PC-3 (cell line): ENCODE measurements at regions of chr11 and their contacts with region 1.

Region 1: DNA sequence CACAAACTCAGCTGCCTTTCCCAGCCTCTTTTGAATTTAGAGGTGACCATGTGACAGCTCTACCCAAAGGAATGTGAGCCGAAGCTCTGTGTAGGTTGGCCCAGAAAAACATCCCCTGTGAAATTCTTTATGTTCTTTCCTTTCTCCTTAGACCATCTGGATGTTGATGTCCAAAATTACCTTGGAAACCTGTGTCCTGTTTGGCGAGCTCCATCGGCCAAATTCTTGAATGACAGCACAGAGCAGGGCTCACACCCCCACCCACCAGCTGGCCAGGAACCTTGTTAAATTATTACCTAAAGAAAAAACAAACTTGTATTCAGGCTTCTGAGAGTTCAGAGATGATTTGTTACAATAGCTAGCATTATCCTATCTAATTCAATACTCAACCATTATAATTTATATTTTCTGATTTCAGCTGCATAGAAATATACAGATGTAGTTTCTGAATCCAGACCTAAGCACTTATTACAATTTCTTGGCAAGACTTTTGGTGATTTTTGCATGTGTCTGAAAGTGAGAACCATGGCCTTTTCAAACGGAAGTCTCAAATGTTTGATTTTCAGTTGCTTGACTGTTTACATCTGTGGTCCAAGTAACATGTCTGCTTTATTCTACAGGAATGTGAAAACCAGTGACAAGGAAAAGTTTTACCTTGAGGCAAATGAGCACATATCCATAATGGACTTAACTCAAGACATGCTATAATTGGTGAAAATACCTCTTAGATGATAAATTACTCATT is 554.2 kb downstream of the NTM start:
- DNase-seq: peak; percentile 81
- ATAC-seq: peak; percentile 56
- H3K4me3 ChIP-seq: no peak overlapping the region
- H3K27ac ChIP-seq: peak overlapping the region; percentile 93
- H3K4me1 ChIP-seq: peaks cover 26% of the 10 kb centered on the region
- H3K27me3 ChIP-seq: no peaks in the 10 kb centered on the region
- CTCF ChIP-seq: no peak

Region 2: DNA sequence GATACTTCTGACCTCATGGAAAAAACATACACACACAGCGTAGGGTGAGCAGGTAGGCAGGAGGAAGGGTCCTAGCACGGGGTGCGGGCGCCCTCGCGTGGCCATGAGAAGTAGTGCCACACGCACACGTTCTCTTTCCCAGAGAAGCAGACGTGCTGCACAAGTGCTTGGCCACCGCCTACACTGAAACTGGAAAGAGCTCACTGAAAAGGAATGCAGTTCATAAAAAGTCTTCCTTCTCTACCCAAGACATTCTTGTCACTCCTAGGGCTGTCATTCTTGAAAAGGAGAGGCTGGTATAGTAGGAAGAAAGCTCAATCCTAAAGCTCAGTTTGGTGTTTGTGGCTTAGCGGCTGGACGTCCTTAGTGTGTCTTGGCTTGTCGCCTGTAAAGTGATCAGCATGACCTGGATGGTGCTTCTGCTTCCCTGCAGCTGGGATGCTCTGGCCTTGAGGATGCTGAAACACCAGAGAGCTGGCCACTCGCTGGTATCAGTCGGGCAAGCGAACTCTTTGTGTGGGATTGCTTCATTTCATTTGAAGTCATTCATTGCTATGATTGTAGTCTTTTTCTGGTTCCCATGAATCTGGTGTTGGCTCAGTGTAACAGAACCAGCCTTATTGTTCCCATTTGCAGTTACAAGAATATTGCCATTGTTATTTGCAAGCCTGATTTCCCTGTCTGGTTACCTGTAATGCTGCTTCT is 250.4 kb before region 1 on chr11:
- CTCF ChIA-PET with region 1: no interaction called
- POLR2A ChIA-PET with region 1: no interaction called
- intact Hi-C with region 1: no loop called
- DNase-seq: peak; percentile 79
- ATAC-seq: peak; percentile 95
- H3K4me3 ChIP-seq: no peak overlapping the region
- H3K27ac ChIP-seq: no peak overlapping the region
- H3K4me1 ChIP-seq: no peaks in the 10 kb centered on the region
- H3K27me3 ChIP-seq: peaks cover 53% of the 10 kb centered on the region
- CTCF ChIP-seq: peak; percentile 96

Region 3: DNA sequence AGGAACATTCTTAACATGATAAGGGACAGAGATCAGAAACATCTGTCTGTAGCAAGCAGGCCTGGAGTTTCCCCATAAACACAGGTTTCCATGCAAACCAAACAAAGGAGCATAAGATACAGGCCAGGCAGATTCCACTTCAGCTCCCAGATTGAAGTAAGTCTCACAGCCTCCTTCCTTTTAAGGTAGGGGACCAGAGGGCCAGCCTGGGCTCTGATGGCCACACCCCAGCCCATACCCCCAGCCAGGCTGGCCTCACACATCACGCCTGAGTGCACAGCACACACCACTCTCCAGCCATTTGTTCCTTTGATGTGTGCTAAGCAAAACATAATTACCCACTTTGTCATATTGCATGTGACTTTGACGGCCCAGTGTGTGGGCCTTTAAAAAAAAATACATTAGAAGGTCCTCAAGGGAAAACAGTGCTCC is 35.5 kb before region 1 on chr11:
- CTCF ChIA-PET with region 1: no interaction called
- POLR2A ChIA-PET with region 1: interaction called, 4 read pairs
- intact Hi-C with region 1: loop called (anchors 2 kb)
- DNase-seq: peak; percentile 66
- ATAC-seq: peak; percentile 52
- H3K4me3 ChIP-seq: no peak overlapping the region
- H3K27ac ChIP-seq: peak overlapping the region; percentile 87
- H3K4me1 ChIP-seq: peaks cover 46% of the 10 kb centered on the region
- H3K27me3 ChIP-seq: no peaks in the 10 kb centered on the region
- CTCF ChIP-seq: no peak

Region 4: DNA sequence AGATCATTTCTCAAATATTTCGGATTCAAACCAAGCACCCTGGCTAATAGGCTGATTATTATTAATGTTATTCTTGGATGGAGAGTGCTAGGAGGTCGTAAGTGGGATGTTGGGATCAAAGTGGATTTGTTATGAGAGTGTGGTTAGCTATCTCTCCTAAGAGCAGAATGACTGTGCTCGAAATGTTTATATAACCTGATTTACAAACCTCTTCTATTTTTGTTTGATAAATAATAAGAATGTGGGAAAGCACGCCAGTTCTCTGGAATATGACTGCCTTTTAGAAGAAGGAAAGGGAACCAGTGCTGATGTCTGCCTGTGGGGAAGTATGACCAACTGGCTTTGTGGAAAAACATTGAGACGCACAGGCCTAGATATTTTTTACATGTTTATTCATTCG is 26.7 kb before region 1 on chr11:
- CTCF ChIA-PET with region 1: no interaction called
- POLR2A ChIA-PET with region 1: no interaction called
- intact Hi-C with region 1: loop called (anchors 1 kb)
- DNase-seq: no peak
- ATAC-seq: no peak
- H3K4me3 ChIP-seq: no peak overlapping the region
- H3K27ac ChIP-seq: peak overlapping the region; percentile 93
- H3K4me1 ChIP-seq: peaks cover 29% of the 10 kb centered on the region; the same call in 1 of the 2 replicates
- H3K27me3 ChIP-seq: no peaks in the 10 kb centered on the region
- CTCF ChIP-seq: no peak

Region 5: GRCh38 chr11:132028380-132029240 is 104.0 kb after region 1 on chr11:
- CTCF ChIA-PET with region 1: no interaction called
- POLR2A ChIA-PET with region 1: no interaction called
- intact Hi-C with region 1: loop called (anchors 2 kb)
- DNase-seq: peak; percentile 44
- ATAC-seq: no peak
- H3K4me3 ChIP-seq: no peak overlapping the region
- H3K27ac ChIP-seq: no peak overlapping the region
- H3K4me1 ChIP-seq: peaks cover 12% of the 10 kb centered on the region
- H3K27me3 ChIP-seq: no peaks in the 10 kb centered on the region
- CTCF ChIP-seq: peak; percentile 62

Region 6: GRCh38 chr11:132064987-132065620 is 140.5 kb after region 1 on chr11:
- CTCF ChIA-PET with region 1: no interaction called
- POLR2A ChIA-PET with region 1: no interaction called
- intact Hi-C with region 1: loop called (anchors 5 kb)
- DNase-seq: peak; percentile 79
- ATAC-seq: peak; percentile 72
- H3K4me3 ChIP-seq: no peak overlapping the region
- H3K27ac ChIP-seq: peak overlapping the region; percentile 34
- H3K4me1 ChIP-seq: peaks cover 22% of the 10 kb centered on the region
- H3K27me3 ChIP-seq: no peaks in the 10 kb centered on the region
- CTCF ChIP-seq: no peak

Region 7: GRCh38 chr11:132126973-132127899 is 202.6 kb after region 1 on chr11:
- CTCF ChIA-PET with region 1: no interaction called
- POLR2A ChIA-PET with region 1: no interaction called
- intact Hi-C with region 1: loop called (anchors 5 kb)
- DNase-seq: peak; percentile 70
- ATAC-seq: peak; percentile 58
- H3K4me3 ChIP-seq: 0 out of 2 replicates have a peak overlapping the region, but pooled peaks have one; percentile 21
- H3K27ac ChIP-seq: no peak overlapping the region
- H3K4me1 ChIP-seq: peaks cover 8% of the 10 kb centered on the region
- H3K27me3 ChIP-seq: no peaks in the 10 kb centered on the region
- CTCF ChIP-seq: peak; percentile 78